Activated CD4-positive, alpha-beta T cell treated with anti-CD3 and anti-CD28 coated beads for 36 hours (primary cell): ENCODE measurements at regions of chr13 and their contacts with region 1.

Region 1: DNA sequence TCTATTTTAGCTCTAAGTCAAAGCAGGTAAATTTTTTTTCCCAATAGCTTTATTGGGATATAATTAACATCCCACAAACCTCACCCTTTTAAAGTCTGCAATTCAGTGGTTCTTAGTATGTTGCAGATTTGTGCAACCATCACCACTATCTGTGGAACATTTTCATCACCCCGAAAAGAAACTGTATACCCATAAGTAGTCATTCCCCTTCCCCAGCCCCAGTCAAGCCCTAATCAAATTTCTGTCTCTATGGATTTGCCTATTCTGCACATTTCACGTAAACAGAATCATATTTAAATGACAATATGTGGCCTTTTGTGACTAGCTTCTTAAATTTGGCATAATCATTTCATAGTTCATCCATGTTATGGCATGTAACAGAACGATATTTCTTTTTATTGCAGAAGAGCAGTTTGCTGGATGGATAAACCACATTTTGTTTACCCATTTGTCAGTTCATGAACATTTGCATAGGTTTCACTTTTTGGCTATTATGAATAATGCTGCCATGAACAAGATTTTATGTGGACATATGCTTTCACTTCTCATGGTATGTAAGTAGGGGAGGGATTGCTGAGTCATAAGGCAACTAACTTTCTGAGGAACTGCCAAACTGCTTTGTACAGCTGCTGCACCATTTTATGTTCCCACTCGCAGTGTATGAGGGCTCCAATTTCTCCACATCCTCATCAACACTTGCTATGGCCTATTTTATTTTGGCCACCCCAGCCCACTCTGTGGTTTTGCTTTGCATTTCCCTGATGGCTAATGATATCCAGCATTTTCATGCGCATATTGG is 10.9 kb downstream of the SLC46A3 start:
- DNase-seq: peak; percentile 25
- ATAC-seq: peak; percentile 94
- H3K4me3 Mint-ChIP-seq: no peak overlapping the region
- H3K27ac Mint-ChIP-seq: no peak overlapping the region
- H3K4me1 Mint-ChIP-seq: peaks cover 11% of the 10 kb centered on the region
- H3K27me3 Mint-ChIP-seq: no peaks in the 10 kb centered on the region

Region 2: DNA sequence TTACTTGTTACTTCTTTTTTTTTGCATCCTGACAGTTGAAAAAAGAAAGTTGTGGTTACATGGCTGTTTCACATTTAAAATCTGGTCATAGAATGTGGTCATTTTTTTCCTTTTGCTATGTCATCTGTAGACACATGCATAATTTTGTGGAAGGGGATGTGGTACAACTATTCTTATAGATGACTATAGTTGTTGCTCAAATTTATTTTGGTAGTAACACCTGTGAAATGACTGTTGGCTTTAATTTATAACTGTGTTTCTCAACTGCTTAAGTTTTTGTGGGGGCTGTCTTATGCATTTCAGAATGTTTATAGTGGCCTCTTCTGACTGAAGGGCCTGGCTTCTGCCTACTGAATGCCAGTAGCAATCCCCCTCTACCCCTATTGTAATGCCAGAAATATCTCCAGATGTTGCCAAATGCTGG is 439.0 kb before region 1 on chr13:
- CTCF ChIA-PET with region 1: no interaction called
- POLR2A ChIA-PET with region 1: no interaction called
- intact Hi-C with region 1: no loop called
- DNase-seq: no peak
- ATAC-seq: peak; percentile 90
- H3K4me3 Mint-ChIP-seq: no peak overlapping the region
- H3K27ac Mint-ChIP-seq: no peak overlapping the region
- H3K4me1 Mint-ChIP-seq: peaks cover 15% of the 10 kb centered on the region
- H3K27me3 Mint-ChIP-seq: no peaks in the 10 kb centered on the region

Region 3: GRCh38 chr13:28718543-28719226 is 10.9 kb after region 1 on chr13 and contains the start of gene SLC46A3:
- CTCF ChIA-PET with region 1: interaction called, 7 read pairs
- POLR2A ChIA-PET with region 1: no interaction called
- intact Hi-C with region 1: loop called in 1 of 2 experiments (anchors 1 kb)
- DNase-seq: peak; percentile 97
- ATAC-seq: peak; percentile 100
- H3K4me3 Mint-ChIP-seq: peak within 1 kb of the TSS; percentile 84
- H3K27ac Mint-ChIP-seq: peak within 1 kb of the TSS; percentile 94
- H3K4me1 Mint-ChIP-seq: peaks cover 23% of the 10 kb centered on the region
- H3K27me3 Mint-ChIP-seq: no peaks in the 10 kb centered on the region
- total RNA-seq, gene SLC46A3: 2.8 to 3.2 TPM

Region 4: GRCh38 chr13:28729541-28729940 is 21.7 kb after region 1 on chr13:
- CTCF ChIA-PET with region 1: no interaction called
- POLR2A ChIA-PET with region 1: no interaction called
- intact Hi-C with region 1: no loop called
- DNase-seq: no peak
- ATAC-seq: no peak
- H3K4me3 Mint-ChIP-seq: no peak overlapping the region
- H3K27ac Mint-ChIP-seq: no peak overlapping the region
- H3K4me1 Mint-ChIP-seq: no peaks in the 10 kb centered on the region
- H3K27me3 Mint-ChIP-seq: peaks cover 3% of the 10 kb centered on the region

Region 5: DNA sequence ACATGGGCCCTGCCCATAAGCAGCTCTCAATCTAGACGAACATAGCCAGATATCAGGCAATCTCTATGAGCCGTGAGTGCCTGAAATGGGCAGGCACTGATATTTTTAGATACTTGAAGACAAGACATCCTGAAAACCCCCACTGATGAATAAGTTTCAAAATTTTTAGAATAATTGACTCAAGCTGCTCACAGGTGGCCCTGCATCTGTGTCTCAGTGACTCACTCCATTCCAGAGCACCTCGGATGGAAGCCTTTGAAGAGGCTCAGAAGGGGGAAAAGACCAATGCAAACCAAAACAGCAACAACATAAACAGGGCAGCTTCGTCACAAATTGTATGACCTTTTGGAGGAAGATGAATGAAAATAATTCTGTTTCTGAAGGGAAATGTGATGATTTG is 53.8 kb after region 1 on chr13:
- CTCF ChIA-PET with region 1: no interaction called
- POLR2A ChIA-PET with region 1: no interaction called
- intact Hi-C with region 1: no loop called
- DNase-seq: no peak
- ATAC-seq: no peak
- H3K4me3 Mint-ChIP-seq: no peak overlapping the region
- H3K27ac Mint-ChIP-seq: no peak overlapping the region
- H3K4me1 Mint-ChIP-seq: no peaks in the 10 kb centered on the region
- H3K27me3 Mint-ChIP-seq: no peaks in the 10 kb centered on the region

Region 6: DNA sequence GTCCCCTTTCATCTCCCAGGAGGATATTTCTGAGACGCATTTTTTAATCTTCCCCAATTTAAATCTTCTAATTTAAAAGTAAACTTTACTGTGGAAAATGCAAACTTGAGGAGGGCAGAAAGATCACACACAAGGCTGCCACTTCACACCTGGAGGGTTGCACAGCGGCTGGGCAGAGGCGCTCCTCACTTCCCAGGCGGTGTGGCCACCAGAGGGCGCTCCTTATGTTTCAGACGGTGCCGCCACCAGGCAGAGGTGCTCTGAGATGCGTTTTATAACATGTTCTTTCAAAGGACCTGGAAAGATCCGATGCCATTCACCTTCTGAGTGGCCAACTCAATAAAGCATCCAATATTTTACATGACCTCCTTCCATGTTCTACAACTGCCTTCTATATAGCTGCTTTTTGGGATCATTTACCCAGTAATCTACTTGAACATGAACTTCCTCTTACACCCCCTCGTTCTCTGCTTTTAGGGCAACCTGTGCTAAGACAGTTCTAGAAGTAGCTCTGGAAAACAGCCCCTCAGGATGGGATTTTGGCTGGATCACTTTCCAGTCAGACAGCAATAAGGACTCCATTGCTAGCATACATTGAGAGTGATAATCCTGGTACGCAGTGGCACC is 97.5 kb after region 1 on chr13:
- CTCF ChIA-PET with region 1: no interaction called
- POLR2A ChIA-PET with region 1: no interaction called
- intact Hi-C with region 1: no loop called
- DNase-seq: peak; percentile 78
- ATAC-seq: no peak
- H3K4me3 Mint-ChIP-seq: no peak overlapping the region
- H3K27ac Mint-ChIP-seq: no peak overlapping the region
- H3K4me1 Mint-ChIP-seq: no peaks in the 10 kb centered on the region
- H3K27me3 Mint-ChIP-seq: peaks cover 11% of the 10 kb centered on the region